GM10248 (cell line): ENCODE measurements at regions of chr6 and their contacts with region 1.

Region 1: DNA sequence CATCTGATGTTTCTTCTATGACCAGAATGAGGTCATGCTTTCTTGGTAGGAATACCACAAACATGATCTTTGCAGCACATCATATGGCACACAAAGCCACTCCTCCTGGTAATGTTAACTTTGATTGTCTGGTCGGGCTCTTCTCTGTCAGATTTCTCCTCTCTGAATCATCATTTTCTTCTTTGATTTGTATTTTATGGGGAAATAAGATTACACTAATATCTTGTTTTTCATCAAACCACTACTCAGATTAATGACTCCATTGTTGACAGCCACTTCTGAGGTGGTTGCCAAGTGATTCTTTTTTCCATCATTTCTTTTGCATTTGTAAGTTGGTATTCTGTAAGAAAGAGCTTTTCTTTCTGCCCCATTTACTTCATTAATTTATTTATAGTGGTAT is 29.5 kb downstream of the TRMT11 start:
- DNase-seq: no peak
- CTCF ChIP-seq: no peak

Region 2: GRCh38 chr6:126002755-126003679 is 12.8 kb before region 1 on chr6:
- CTCF ChIA-PET with region 1: interaction called, 11 read pairs
- POLR2A ChIA-PET with region 1: no interaction called
- DNase-seq: no peak
- CTCF ChIP-seq: no peak

Region 3: GRCh38 chr6:126086560-126086959 is 70.7 kb after region 1 on chr6:
- CTCF ChIA-PET with region 1: no interaction called
- POLR2A ChIA-PET with region 1: no interaction called
- DNase-seq: no peak
- CTCF ChIP-seq: no peak

Region 4: DNA sequence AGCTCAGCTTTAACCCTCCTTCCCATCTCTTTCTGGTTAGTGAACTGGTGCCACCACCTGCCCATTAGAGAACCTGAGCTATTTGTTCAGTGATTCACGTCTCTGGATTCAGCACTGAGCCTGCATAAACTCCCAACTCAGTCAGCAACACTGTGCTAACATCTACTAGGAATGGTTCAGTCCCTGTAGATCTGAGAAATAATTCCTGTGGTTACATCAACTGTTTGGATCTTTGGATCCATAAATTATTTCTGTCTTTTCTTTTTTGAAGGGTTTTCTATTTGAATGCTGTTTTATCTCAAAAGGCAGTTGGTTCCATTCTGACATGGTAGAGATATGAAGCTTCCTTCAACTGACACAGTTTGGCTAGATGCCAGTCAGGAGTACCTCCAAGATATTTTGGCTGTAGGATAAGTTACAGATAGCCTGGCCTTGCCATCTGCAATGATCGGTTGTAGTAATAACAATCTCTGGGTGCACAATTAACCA is 96.3 kb after region 1 on chr6:
- CTCF ChIA-PET with region 1: no interaction called
- POLR2A ChIA-PET with region 1: no interaction called
- DNase-seq: no peak
- CTCF ChIP-seq: no peak